Naive thymus-derived CD4-positive, alpha-beta T cell (primary cell): ENCODE measurements at regions of chr4 and their contacts with region 1.

Region 1: DNA sequence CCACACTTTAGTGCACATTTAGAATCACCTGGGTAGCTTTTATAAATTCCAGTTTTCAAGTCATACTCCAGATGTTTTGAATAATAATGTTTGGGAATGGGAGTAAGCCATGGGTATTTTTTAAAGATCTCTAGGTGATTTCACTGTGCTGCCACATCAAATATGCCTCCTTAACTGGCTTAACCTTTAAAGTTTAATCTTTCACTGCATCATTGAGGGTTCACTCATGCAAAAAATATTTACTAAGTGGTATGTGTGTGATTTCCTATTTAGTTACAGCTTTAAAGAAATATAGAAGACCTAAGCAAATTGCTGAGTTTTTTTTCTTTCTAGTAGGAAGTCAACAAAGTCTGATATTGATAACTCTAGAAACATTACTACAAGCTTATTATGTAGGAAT is 277.5 kb upstream of the NWD2 start:
- DNase-seq: no peak
- ATAC-seq: no peak
- H3K4me3 ChIP-seq: no peak overlapping the region
- H3K4me3 Mint-ChIP-seq: no peak overlapping the region
- H3K27ac ChIP-seq: no peak overlapping the region
- H3K27ac Mint-ChIP-seq: no peak overlapping the region
- H3K4me1 ChIP-seq: no peaks in the 10 kb centered on the region
- H3K4me1 Mint-ChIP-seq: no peaks in the 10 kb centered on the region
- H3K27me3 ChIP-seq: no peaks in the 10 kb centered on the region
- H3K27me3 Mint-ChIP-seq: peaks cover 0 to 6% (median 0%) of the 10 kb centered on the region in 5 donors

Region 2: GRCh38 chr4:38034986-38035882 is 1068.2 kb after region 1 on chr4:
- CTCF ChIA-PET with region 1: no interaction called
- POLR2A ChIA-PET with region 1: no interaction called
- intact Hi-C with region 1: loop called in 1 of 2 experiments (anchors 10 kb)
- DNase-seq: peak in 7 of 9 donors; percentile 29 to 66 (median 53)
- ATAC-seq: peak; percentile 68
- H3K4me3 ChIP-seq: no peak overlapping the region
- H3K4me3 Mint-ChIP-seq: no peak overlapping the region
- H3K27ac ChIP-seq: no peak overlapping the region
- H3K27ac Mint-ChIP-seq: no peak overlapping the region
- H3K4me1 ChIP-seq: no peaks in the 10 kb centered on the region
- H3K4me1 Mint-ChIP-seq: peaks cover 0 to 6% (median 0%) of the 10 kb centered on the region in 7 donors
- H3K27me3 ChIP-seq: no peaks in the 10 kb centered on the region
- H3K27me3 Mint-ChIP-seq: no peaks in the 10 kb centered on the region